ENCODE measurements at regions of chr9 and their contacts with region 1.

Region 1: GRCh38 chr9:72022841-72023240 is 37.6 kb downstream of the C9orf57 start:
- DNase-seq: no peak
- ATAC-seq: no peak

Region 2: DNA sequence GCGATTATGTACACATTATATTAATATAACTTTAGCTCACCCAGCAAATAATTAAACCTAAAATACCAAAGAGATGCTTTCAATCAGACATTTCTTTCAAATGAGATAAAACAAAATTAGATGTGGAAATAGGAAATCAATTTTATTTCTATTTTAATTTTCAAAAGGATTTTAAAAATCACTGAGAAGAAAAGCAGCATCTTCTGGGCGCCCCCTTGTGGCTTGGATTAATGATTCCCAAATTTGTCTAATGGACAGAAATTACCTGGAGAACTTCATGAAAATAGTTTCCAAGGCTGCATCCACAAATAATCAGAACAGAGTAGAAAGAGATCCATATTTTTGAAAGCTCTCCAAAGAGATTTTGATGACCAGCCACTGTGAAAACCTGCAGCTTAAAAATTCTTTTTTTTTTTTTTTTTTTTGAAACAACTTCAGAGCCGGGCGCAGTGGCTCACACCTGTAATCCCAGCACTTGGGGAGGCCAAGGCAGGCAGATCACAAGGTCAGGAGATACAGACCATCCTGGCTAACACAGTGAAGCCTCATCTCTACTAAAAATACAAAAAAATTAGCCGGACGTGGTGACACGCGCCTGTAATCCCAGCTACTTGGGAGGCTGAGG is 203.6 kb before region 1 on chr9:
- intact Hi-C with region 1: loop called (anchors 10 kb)
- DNase-seq: no peak
- ATAC-seq: no peak

Region 3: GRCh38 chr9:72089451-72090130 is 66.8 kb after region 1 on chr9:
- intact Hi-C with region 1: no loop called
- DNase-seq: no peak
- ATAC-seq: no peak

Measured in sciatic nerve (tissue), 2 donors.